SK-N-SH (cell line): ENCODE measurements at regions of chr1 and their contacts with region 1.

Region 1: DNA sequence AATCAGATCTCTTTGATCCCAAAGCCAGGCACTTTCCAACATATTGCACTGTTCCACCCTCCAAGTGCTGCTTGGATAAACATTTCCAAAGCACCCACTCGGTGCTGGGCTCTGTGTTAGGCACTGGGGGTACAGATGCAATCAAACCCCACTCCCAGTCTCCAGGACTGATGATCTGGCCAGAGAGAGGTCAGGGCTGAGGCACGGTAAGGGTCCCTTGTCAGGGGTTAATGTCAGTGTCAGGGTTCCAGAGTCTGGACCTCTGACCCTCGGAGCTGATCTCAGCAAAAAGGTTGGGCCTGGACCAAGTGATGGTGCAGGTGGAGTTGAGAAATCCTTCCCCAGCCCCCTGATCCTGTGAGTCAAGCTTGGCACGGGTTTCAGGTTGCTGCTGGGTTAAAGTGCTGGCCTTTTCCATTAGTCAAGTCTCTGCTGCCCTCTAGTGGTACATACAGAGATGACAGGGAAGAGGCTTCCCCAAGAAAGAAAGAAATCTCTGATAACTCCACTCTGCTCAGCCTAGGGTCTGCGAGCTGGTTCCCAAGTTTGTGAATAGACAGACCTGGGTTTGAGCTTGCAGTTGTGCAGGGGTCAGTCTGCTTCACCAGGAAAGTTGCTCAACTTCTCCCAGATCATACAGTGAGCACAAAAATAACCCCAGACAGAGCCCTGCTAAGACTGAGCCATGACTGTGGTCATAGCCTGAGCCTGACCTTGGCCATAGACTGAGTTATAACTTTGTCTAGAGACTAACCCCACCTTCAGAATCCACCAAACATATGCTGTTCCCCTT is 74.6 kb downstream of the DMRTA2 start:
- DNase-seq: peak; percentile 77
- H3K4me3 ChIP-seq: no peak overlapping the region
- H3K27ac ChIP-seq: peak overlapping the region in 1 of 2 experiments; percentile 48; a peak in 1 of 4 replicates
- H3K4me1 ChIP-seq: peaks cover 0 to 23% of the 10 kb centered on the region in 2 experiments; a peak in 2 of 4 replicates
- H3K27me3 ChIP-seq: no peaks in the 10 kb centered on the region
- CTCF ChIP-seq: peak; percentile 82
- EP300 ChIP-seq: peak in 1 of 2 experiments; percentile 30; a peak in 1 of 4 replicates
- RAD21 ChIP-seq: peak; percentile 99

Region 2: DNA sequence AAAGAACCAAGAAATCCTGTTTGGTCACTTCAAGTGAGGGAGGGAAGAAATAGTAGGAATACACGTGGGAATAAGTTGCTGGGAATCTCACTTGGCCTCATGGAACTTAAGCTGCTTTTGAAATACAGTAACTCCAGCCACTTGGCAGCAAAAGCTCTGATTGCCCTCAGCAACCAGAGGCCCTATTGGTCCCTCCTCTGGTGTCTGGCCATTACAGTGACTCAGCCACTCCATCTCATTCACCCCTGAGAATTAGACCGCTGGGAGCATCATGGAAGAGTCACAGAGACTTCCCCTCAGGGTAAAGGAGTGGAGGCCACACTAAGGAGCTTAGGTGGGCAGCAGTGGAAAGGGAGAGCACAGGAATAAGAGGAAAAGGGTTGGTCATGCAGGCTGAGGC is 140.3 kb before region 1 on chr1:
- CTCF ChIA-PET with region 1: interaction called, 12 read pairs
- POLR2A ChIA-PET with region 1: no interaction called
- DNase-seq: peak; percentile 23
- H3K4me3 ChIP-seq: no peak overlapping the region
- H3K27ac ChIP-seq: peak overlapping the region in 1 of 2 experiments; percentile 63; a peak in 2 of 4 replicates
- H3K4me1 ChIP-seq: peaks cover 0 to 17% of the 10 kb centered on the region in 2 experiments; a peak in 2 of 4 replicates
- H3K27me3 ChIP-seq: no peaks in the 10 kb centered on the region
- CTCF ChIP-seq: no peak
- EP300 ChIP-seq: no peak
- RAD21 ChIP-seq: no peak

Region 3: GRCh38 chr1:50559421-50559820 is 210.8 kb after region 1 on chr1:
- CTCF ChIA-PET with region 1: no interaction called
- POLR2A ChIA-PET with region 1: no interaction called
- DNase-seq: no peak
- H3K4me3 ChIP-seq: no peak overlapping the region
- H3K27ac ChIP-seq: no peak overlapping the region
- H3K4me1 ChIP-seq: no peaks in the 10 kb centered on the region; a peak in 1 of 4 replicates
- H3K27me3 ChIP-seq: no peaks in the 10 kb centered on the region
- CTCF ChIP-seq: no peak
- EP300 ChIP-seq: no peak
- RAD21 ChIP-seq: no peak